ENCODE measurements at regions of chr17 and their contacts with region 1.

Region 1: GRCh38 chr17:76121932-76122430 is 18.4 kb upstream of the EXOC7 start:
- DNase-seq: peak in 3 of 9 experiments; percentile 23 to 63 (median 48)
- ATAC-seq: peak; percentile 10
- H3K4me3 ChIP-seq: peak overlapping the region; percentile 47 to 49
- H3K4me3 Mint-ChIP-seq: peak overlapping the region; percentile 37
- H3K27ac ChIP-seq: peak overlapping the region in 1 of 2 experiments; percentile 27
- H3K27ac Mint-ChIP-seq: no peak overlapping the region
- H3K4me1 ChIP-seq: peaks cover 33% of the 10 kb centered on the region
- H3K4me1 Mint-ChIP-seq: peaks cover 20% of the 10 kb centered on the region
- H3K27me3 ChIP-seq: no peaks in the 10 kb centered on the region
- H3K27me3 Mint-ChIP-seq: no peaks in the 10 kb centered on the region
- CTCF ChIP-seq: no peak

Region 2: GRCh38 chr17:76141212-76142038 is 19.4 kb after region 1 on chr17 and contains the start of gene FOXJ1:
- CTCF ChIA-PET with region 1: interaction called, 17 read pairs
- POLR2A ChIA-PET with region 1: interaction called, 8 read pairs
- intact Hi-C with region 1: loop called (anchors 1 to 2 kb)
- DNase-seq: peak; percentile 86 to 96 (median 91)
- ATAC-seq: peak; percentile 55
- H3K4me3 ChIP-seq: peak within 1 kb of the TSS; percentile 54 to 67
- H3K4me3 Mint-ChIP-seq: peak within 1 kb of the TSS; percentile 88
- H3K27ac ChIP-seq: peak within 1 kb of the TSS; percentile 45 to 59
- H3K27ac Mint-ChIP-seq: peak within 1 kb of the TSS; percentile 88
- H3K4me1 ChIP-seq: peaks cover 74% of the 10 kb centered on the region
- H3K4me1 Mint-ChIP-seq: peaks cover 65% of the 10 kb centered on the region
- H3K27me3 ChIP-seq: peaks cover 0 to 8% of the 10 kb centered on the region in 2 experiments
- H3K27me3 Mint-ChIP-seq: no peaks in the 10 kb centered on the region
- CTCF ChIP-seq: no peak
- total RNA-seq, gene FOXJ1: 2.2 to 2.7 TPM

Region 3: GRCh38 chr17:76191896-76192295 is 69.9 kb after region 1 on chr17:
- CTCF ChIA-PET with region 1: interaction called, 39 read pairs
- POLR2A ChIA-PET with region 1: interaction called, 4 read pairs
- intact Hi-C with region 1: no loop called
- DNase-seq: peak in 5 of 9 experiments; percentile 32 to 89 (median 69)
- ATAC-seq: peak; percentile 80
- H3K4me3 ChIP-seq: peak overlapping the region; percentile 18 to 23
- H3K4me3 Mint-ChIP-seq: peak overlapping the region; percentile 65
- H3K27ac ChIP-seq: peak overlapping the region; percentile 59 to 60
- H3K27ac Mint-ChIP-seq: peak overlapping the region; percentile 94
- H3K4me1 ChIP-seq: peaks cover 93% of the 10 kb centered on the region
- H3K4me1 Mint-ChIP-seq: peaks cover 81% of the 10 kb centered on the region
- H3K27me3 ChIP-seq: no peaks in the 10 kb centered on the region
- H3K27me3 Mint-ChIP-seq: no peaks in the 10 kb centered on the region
- CTCF ChIP-seq: no peak

Region 4: GRCh38 chr17:76271669-76272540 is 149.9 kb after region 1 on chr17:
- CTCF ChIA-PET with region 1: interaction called, 85 read pairs
- POLR2A ChIA-PET with region 1: interaction called, 6 read pairs
- intact Hi-C with region 1: no loop called
- DNase-seq: peak in 8 of 9 experiments; percentile 32 to 91 (median 72)
- ATAC-seq: peak; percentile 39
- H3K4me3 ChIP-seq: peak overlapping the region; percentile 57 to 82
- H3K4me3 Mint-ChIP-seq: peak overlapping the region; percentile 79
- H3K27ac ChIP-seq: peak overlapping the region; percentile 75 to 96
- H3K27ac Mint-ChIP-seq: peak overlapping the region; percentile 94
- H3K4me1 ChIP-seq: peaks cover 84% of the 10 kb centered on the region
- H3K4me1 Mint-ChIP-seq: peaks cover 64% of the 10 kb centered on the region
- H3K27me3 ChIP-seq: no peaks in the 10 kb centered on the region
- H3K27me3 Mint-ChIP-seq: no peaks in the 10 kb centered on the region
- CTCF ChIP-seq: no peak